CD8-positive, alpha-beta memory T cell (primary cell): ENCODE measurements at regions of chr1 and their contacts with region 1.

Region 1: DNA sequence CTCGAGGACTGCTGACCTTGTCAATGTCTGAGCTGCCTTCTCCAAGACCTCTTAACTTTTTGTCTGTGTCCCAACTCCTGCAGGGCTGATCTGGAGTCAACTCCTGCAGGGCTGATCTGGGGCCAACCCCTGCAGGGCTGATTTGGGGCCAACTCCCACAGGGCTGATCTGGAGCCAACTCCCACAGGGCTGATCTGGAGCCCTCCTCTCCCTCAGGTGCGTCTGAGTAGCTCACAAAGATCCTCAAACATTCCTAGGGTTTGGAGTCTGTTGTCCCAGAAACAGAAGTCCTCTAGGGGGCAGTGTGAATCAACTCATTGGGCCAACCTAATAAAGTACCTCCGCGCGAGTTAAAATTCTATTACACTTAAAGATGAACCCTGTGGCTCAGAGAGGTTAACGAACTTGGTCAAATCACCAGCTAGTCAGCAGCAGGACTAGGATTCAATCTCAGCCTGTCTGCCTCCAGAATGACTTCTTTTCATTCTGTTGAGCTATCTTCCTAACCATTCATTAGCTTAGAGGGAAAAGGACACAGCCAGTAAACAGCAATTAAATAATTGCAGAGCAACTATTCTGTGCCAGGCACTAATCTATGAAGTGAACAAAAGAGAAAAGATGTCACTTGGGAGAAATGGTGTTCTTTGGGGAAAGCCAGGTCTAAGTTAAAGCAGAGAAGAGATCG is 17.2 kb upstream of the RLF start:
- DNase-seq: peak; percentile 9 to 60 (median 44)
- H3K4me3 ChIP-seq: no peak overlapping the region
- H3K4me3 Mint-ChIP-seq: no peak overlapping the region
- H3K27ac ChIP-seq: no peak overlapping the region
- H3K27ac Mint-ChIP-seq: no peak overlapping the region
- H3K4me1 ChIP-seq: no peaks in the 10 kb centered on the region
- H3K4me1 Mint-ChIP-seq: peaks cover 3 to 6% (median 3%) of the 10 kb centered on the region in 3 donors
- H3K27me3 ChIP-seq: peaks cover 5% of the 10 kb centered on the region
- H3K27me3 Mint-ChIP-seq: peaks cover 23 to 40% of the 10 kb centered on the region in 2 donors

Region 2: DNA sequence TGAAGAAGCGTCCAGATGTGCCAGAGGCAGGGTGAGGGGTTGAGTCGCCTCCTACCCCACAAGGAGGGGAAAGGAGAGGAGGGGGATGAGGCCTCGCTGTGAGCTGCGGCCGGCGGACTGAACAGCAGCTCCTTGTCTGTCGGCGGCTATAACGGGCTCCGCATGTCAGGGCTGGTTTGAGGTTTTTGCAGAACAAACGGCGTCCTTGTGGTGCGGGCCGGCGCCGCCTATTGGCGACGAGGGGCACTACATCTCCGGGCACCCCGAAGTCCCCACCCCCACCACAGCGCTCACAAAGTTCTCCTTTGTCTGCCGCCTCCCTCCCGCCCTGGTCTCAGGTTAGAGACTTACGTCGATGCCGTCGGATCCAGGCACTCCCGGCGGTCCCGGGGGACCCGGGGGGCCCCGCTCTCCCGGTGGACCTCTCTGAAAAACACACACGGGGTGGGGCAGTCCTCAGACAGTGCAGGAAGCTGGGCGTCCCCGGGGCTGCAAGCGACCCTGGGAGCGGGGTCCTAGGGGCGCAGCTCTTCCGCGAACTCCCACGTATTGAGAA is 171.3 kb after region 1 on chr1:
- CTCF ChIA-PET with region 1: interaction called, 21 read pairs
- POLR2A ChIA-PET with region 1: interaction called, 4 read pairs
- DNase-seq: peak; percentile 72 to 88 (median 81)
- H3K4me3 ChIP-seq: peak overlapping the region; percentile 80
- H3K4me3 Mint-ChIP-seq: peak overlapping the region; percentile 84 to 93 (median 90)
- H3K27ac ChIP-seq: no peak overlapping the region
- H3K27ac Mint-ChIP-seq: peak overlapping the region in 5 of 8 donors; percentile 15 to 89 (median 84)
- H3K4me1 ChIP-seq: peaks cover 19% of the 10 kb centered on the region
- H3K4me1 Mint-ChIP-seq: peaks cover 13 to 41% (median 23%) of the 10 kb centered on the region in 3 donors
- H3K27me3 ChIP-seq: peaks cover 5% of the 10 kb centered on the region
- H3K27me3 Mint-ChIP-seq: peaks cover 8 to 18% of the 10 kb centered on the region in 2 donors

Region 3: DNA sequence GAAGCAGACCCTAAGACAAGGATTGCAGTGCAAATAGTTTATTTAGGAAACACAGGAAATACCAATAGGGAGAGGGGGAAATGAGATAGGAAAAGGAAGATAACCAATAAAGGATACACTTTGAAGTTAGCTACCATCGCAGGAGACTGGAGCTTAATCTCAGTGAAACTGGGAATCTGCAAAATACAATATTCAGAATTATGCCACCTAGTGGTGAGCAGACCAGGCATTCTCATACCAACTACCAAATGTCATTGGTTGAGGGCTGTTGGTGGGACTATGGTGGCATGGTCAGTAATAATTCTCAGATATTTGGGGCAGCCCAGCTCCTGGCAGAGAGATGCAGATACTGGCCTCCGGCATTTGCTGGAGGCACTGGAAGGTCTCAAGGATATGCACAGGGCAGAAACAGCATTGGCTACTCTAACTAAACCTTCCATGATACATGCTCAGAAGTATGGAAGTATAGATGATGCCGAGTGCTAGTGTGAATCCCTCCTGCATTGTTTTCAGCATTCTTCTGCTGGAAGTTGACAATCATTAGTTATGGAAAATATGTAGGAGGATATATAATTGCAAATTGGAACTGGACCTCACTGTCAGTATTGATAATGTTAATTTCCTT is 294.5 kb after region 1 on chr1:
- CTCF ChIA-PET with region 1: interaction called, 27 read pairs
- POLR2A ChIA-PET with region 1: no interaction called
- DNase-seq: peak in 2 of 5 donors; percentile 14 to 34
- H3K4me3 ChIP-seq: no peak overlapping the region
- H3K4me3 Mint-ChIP-seq: no peak overlapping the region
- H3K27ac ChIP-seq: no peak overlapping the region
- H3K27ac Mint-ChIP-seq: no peak overlapping the region
- H3K4me1 ChIP-seq: no peaks in the 10 kb centered on the region
- H3K4me1 Mint-ChIP-seq: peaks cover 2 to 7% (median 4%) of the 10 kb centered on the region in 3 donors
- H3K27me3 ChIP-seq: no peaks in the 10 kb centered on the region
- H3K27me3 Mint-ChIP-seq: no peaks in the 10 kb centered on the region